ENCODE measurements at regions of chr15 and their contacts with region 1.

Region 1: GRCh38 chr15:75684642-75685041 is 28.0 kb downstream of the CSPG4 start:
- DNase-seq: no peak
- H3K4me3 ChIP-seq: no peak overlapping the region
- H3K27ac ChIP-seq: no peak overlapping the region
- H3K27me3 ChIP-seq: no peaks in the 10 kb centered on the region
- CTCF ChIP-seq: no peak

Region 2: GRCh38 chr15:75483961-75484360 is 200.7 kb before region 1 on chr15:
- intact Hi-C with region 1: no loop called
- DNase-seq: no peak
- H3K4me3 ChIP-seq: no peak overlapping the region
- H3K27ac ChIP-seq: no peak overlapping the region
- H3K27me3 ChIP-seq: no peaks in the 10 kb centered on the region
- CTCF ChIP-seq: no peak

Region 3: DNA sequence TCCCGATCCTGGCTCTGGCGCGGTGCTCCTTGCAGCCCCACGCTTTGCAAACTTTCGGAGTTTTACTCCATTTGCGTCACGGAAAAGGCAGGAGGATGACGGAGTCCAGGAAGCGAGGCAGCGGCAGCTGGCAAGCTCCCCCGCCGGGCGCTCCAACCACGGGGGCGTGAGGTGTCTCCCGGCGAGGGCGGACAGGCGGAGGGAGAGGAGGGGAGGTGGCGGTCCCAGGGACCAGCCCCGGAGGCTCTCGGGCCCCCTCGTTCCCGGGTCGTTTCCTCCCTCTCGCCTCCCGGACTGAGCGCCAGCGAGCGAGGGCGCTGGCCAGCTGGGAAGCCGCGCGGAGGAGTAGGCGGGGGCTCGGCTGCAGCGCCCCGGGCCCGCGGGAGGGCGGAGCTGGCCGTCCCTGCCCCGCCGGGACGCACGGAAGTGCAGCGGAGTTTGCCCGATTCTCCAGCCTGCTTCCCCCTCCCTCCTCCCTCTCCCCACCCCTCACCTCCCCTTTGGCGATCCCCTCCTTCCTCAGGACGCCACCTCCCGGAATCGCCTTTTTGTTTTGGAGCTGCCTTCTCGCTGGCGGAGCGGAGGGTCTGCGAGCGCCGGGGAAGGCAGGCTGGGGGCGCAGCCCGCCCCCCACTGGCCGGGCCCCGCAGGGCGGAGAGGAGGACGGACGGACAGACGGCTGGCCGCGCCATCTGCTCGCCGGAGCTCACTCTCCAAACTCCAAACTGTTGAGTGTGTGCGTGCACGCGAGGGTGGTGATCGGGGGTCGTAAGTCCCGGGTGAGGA is 37.1 kb before region 1 on chr15 and contains the start of gene SNX33:
- intact Hi-C with region 1: loop called in 1 of 2 experiments (anchors 5 kb)
- DNase-seq: peak in 6 of 10 donors; percentile 29 to 79 (median 58)
- H3K4me3 ChIP-seq: peak within 1 kb of the TSS; percentile 61 to 91 (median 81)
- H3K27ac ChIP-seq: peak within 1 kb of the TSS in 58 of 59 donors; percentile 51 to 94 (median 82)
- H3K27me3 ChIP-seq: no peaks in the 10 kb centered on the region
- CTCF ChIP-seq: peak in 44 of 56 donors; percentile 7 to 60 (median 30)
- total RNA-seq, gene SNX33: 5.9 to 32.5 (median 11.7) TPM

Region 4: DNA sequence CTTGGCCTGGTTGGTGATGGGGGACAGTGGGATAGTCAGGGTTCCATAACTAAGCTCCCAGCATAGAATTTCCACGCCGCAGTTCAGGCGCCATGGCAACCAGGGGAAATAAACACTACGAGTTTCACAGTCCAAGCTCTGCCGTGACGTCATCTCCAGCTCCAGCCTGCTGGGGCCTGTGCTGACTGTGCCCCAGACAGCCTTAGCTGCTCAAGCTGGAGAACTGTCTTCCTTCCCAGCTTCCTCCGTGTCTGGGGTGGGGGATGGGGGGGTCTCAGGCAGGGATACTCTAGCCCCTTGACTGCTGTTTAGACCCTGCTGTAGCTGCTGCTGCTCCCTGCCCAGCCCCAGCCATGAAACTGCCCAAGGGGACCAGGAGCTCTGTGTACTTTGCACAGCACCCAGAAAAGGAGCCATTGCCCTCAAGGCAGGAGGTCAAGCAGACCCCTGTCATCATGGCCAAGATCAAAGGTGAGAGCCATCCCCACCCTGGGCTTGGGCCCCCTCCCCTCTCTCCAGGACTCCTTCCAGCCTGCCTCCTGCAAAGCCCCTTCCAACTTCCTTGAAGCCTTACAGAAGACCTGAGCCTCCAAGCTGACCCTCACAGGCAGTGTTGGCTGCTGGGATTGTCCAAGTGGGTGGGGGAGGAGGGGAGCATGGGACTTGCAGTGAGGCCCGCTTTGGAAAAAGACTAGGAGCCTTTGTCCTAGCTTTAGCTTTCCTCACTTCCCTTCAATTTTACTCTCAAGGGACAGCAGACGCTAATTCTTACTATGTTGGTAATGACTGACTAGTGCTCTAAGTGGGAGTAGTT is 39.4 kb after region 1 on chr15:
- intact Hi-C with region 1: no loop called
- DNase-seq: peak; percentile 47 to 91 (median 80)
- H3K4me3 ChIP-seq: no peak overlapping the region
- H3K27ac ChIP-seq: peak overlapping the region in 22 of 59 donors; percentile 7 to 65 (median 46)
- H3K27me3 ChIP-seq: no peaks in the 10 kb centered on the region
- CTCF ChIP-seq: no peak

Region 5: DNA sequence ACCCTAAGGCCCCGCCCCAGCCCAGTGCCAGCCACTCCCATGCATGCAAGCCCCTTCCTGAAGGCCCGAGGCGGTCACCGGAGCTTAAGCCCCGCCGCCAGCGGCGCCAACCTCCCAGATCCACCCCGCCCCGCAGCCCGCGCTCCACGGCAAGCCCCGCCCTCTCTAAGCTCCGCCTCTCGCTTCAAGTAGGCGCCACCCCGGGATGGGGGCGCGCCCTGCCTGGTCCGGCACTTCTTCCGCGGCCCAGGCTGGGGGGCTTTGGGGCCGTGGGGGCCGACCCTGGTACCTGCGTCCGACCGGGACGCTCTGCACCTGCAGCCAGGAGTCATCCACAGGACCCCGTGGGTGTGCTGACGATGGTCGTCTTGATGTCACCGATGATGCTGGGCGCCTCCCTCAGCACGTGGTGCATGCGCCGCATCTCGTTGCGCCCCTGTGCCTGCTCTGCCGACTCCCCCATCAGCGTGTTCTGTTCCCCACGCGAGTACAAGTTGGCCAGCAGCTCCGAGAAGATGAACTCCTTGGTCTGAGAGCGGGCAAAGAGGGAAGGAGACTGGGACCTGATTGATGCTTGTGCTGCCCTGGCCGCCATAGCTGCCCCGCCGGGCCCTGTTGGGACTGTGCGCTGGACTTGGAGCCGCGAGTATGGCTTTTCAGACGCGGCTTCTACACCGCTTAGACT is 54.1 kb after region 1 on chr15:
- intact Hi-C with region 1: no loop called
- DNase-seq: peak; percentile 73 to 96 (median 92)
- H3K4me3 ChIP-seq: peak overlapping the region; percentile 58 to 99 (median 82)
- H3K27ac ChIP-seq: peak overlapping the region in 39 of 59 donors; percentile 23 to 87 (median 69)
- H3K27me3 ChIP-seq: no peaks in the 10 kb centered on the region
- CTCF ChIP-seq: peak in 7 of 56 donors; percentile 5 to 37 (median 16)

Region 6: GRCh38 chr15:75801859-75802593 is 117.4 kb after region 1 on chr15:
- intact Hi-C with region 1: loop called (anchors 5 kb)
- DNase-seq: peak; percentile 56 to 81 (median 66)
- H3K4me3 ChIP-seq: peak overlapping the region in 52 of 59 donors; percentile 20 to 66 (median 42)
- H3K27ac ChIP-seq: no peak overlapping the region
- H3K27me3 ChIP-seq: peaks cover 0 to 16% (median 0%) of the 10 kb centered on the region in 45 donors
- CTCF ChIP-seq: peak; percentile 44 to 97 (median 91)